Endothelial cell of umbilical vein (primary cell): ENCODE measurements at regions of chr2 and their contacts with region 1.

Region 1: DNA sequence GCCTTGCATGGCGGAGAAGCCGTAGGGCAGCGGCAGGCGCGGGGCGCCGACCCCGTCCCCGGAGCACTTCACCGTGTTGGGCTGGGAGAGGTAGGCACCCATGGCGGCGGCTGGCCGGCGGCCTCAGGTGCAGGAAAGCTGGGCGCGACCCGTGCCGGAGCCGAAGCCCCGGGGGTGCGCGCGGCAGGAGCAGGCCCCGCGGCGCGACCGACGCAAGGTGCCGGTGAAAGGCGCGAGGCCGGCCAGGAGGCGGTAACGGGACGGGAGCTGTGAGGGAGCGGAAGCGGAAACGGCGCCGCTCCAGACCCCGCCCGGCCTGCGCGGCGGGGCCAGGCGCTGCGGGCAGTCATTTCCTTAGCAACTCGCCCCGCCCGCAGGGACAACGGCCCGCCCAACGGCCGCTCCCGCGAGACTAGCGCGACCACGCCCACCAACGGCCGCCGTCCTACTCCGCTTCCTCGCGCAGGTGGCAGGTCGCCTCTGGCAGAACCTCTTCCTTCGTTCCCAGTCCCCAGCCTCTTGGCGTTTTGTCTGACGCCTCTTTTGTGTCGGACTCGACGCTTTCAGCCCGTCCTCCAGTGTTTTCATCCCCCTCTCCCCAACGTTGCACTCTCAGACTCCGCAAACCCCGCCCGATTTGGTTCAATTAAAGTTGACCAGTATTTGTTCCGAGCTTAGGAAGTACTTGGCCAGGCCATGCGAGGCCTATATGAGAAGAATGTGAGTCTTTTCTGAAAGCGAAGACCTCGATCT is at the start of gene PPM1G:
- DNase-seq: peak; percentile 97
- H3K4me3 ChIP-seq: peak within 1 kb of the TSS; percentile 71 to 90 (median 84)
- H3K27ac ChIP-seq: peak within 1 kb of the TSS; percentile 73
- H3K4me1 ChIP-seq: peaks cover 20% of the 10 kb centered on the region
- H3K27me3 ChIP-seq: peaks cover 1 to 5% of the 10 kb centered on the region in 2 experiments
- CTCF ChIP-seq: no peak
- POLR2A ChIP-seq: peak; percentile 98
- total RNA-seq, gene PPM1G: 131 and 135 TPM in 2 replicates

Region 2: DNA sequence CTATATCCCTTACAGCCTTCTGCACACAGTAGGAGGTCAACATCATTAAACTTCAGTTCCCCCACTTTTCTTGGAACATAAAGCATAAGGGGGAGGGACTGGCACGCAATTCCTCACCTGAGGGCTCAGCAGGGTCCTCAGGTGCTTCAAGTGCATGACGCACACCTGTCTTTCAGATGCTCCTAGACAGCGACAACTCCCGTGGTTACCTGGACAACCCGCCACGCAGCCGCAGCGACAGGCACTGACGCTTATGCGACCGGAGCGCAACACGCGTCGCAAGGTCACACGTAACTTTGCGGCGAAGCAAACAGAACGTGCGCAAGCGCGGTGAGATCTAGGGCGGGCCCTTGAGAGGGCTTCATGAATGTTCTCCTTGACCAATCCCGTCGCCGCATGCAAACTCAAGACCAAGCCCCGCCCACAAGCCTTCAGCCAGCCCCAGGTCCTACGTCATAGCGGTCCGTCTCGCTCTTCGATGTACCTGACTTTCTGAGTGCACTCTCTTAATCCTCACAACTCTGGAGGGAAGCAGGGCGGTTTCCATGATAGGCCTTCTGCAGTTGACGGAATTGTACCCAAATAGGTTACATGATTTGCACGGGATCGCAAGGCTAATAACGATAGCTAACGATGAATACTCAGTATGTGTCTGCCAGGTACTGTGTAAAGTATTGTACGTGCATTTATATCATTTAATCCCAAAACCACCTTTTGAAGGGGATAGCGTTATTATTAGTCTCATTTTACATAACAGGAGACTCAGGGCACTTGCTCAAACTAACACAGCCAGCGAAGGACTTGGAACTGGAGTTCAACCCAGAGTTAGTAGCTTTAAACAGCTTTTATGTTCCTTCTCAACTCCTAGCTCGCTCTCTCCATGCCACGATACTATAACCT is 80.3 kb after region 1 on chr2 and contains the start of gene IFT172:
- CTCF ChIA-PET with region 1: no interaction called
- POLR2A ChIA-PET with region 1: no interaction called
- dilution Hi-C with region 1: no loop called
- intact Hi-C with region 1: loop called (anchors 1 kb)
- DNase-seq: peak; percentile 99
- H3K4me3 ChIP-seq: peak within 1 kb of the TSS; percentile 9 to 66 (median 56)
- H3K27ac ChIP-seq: peak within 1 kb of the TSS; percentile 0
- H3K4me1 ChIP-seq: peaks cover 15% of the 10 kb centered on the region
- H3K27me3 ChIP-seq: no peaks in the 10 kb centered on the region
- CTCF ChIP-seq: no peak
- POLR2A ChIP-seq: peak; percentile 83
- total RNA-seq, gene IFT172: 34.1 and 35.6 TPM in 2 replicates

Region 3: GRCh38 chr2:27663463-27664249 is 254.2 kb after region 1 on chr2 and contains the starts of genes SLC4A1AP and SUPT7L:
- CTCF ChIA-PET with region 1: interaction called, 3 read pairs
- POLR2A ChIA-PET with region 1: no interaction called
- dilution Hi-C with region 1: no loop called
- intact Hi-C with region 1: loop called (anchors 1 kb)
- DNase-seq: peak; percentile 92
- H3K4me3 ChIP-seq: peak within 1 kb of the TSS; percentile 71 to 98 (median 84)
- H3K27ac ChIP-seq: peak within 1 kb of the TSS; percentile 73
- H3K4me1 ChIP-seq: peaks cover 37% of the 10 kb centered on the region
- H3K27me3 ChIP-seq: no peaks in the 10 kb centered on the region
- CTCF ChIP-seq: no peak
- POLR2A ChIP-seq: peak; percentile 67
- total RNA-seq, gene SLC4A1AP: 26.2 and 28.4 TPM in 2 replicates
- total RNA-seq, gene SUPT7L: 30.2 and 30.3 TPM in 2 replicates